Left ventricle myocardium superior (tissue), 1 donor: ENCODE measurements at regions of chr1 and their contacts with region 1.

Region 1: GRCh38 chr1:223748773-223749733 is 36.7 kb downstream of the CAPN2 start:
- DNase-seq: peak; percentile 84
- ATAC-seq: peak; percentile 93

Region 2: GRCh38 chr1:223557130-223557475 is 191.9 kb before region 1 on chr1:
- intact Hi-C with region 1: no loop called
- DNase-seq: no peak
- ATAC-seq: no peak

Region 3: DNA sequence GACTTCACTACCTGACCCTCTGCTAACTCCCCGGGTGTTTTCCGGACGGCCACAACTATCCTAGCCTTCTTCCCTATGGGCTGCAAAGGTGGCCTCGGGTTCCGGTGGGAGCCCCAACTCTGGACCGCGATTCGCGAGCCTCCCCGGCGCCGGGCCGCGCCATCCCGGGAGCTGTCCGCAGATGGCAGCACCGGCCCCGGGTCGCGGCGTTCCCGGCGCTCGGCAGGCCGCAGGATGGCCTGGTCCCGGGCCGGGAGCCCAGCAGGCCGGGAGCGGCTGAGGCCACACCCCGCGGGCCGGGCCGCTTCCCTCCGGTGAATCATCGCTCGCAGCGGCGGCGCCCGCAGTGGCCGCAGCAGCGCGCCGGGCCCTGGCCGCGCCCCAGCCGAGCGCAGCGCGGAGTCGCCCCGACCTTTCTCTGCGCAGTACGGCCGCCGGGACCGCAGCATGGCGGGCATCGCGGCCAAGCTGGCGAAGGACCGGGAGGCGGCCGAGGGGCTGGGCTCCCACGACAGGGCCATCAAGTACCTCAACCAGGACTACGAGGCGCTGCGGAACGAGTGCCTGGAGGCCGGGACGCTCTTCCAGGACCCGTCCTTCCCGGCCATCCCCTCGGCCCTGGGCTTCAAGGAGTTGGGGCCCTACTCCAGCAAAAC is 36.7 kb before region 1 on chr1 and contains the start of gene CAPN2:
- intact Hi-C with region 1: loop called (anchors 5 kb)
- DNase-seq: peak; percentile 94
- ATAC-seq: peak; percentile 95
- total RNA-seq, gene CAPN2: 76.9 TPM